AG04449 (cell line): ENCODE measurements at regions of chr20 and their contacts with region 1.

Region 1: DNA sequence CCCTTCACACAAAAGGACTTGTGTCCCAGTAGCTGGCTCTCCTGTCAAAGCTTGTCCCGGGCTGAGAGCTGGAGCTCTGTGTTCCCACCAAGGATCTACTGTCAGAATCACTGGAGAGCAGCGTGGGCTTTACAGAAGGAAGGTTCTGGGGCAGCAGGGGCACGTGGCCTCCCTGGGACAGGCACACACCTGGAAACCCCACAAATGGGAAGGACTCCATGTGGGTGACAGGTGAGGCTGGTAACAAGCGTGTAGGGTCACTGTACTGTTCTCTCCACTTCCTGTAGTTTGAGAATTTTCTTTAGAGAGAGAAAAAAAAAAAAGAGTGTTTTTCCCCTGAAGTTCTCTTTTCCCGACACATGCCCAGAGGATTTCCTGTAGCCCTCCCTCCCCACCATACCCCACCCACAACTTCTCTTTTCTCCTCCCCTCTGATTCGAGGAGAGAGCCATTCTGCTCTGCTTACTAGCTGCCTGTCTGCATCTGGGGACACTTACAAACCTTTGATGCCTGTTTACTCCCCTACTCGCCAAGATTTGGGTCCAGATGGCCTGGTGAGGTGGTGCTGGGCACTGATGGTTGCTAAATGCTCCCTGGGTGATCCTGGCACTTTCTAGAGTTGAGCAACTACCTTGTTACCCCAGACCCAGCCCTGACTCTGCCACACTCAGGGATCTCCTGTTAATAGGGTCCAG is 84.1 kb upstream of the SIRPA start:
- DNase-seq: no peak
- H3K4me3 ChIP-seq: no peak overlapping the region
- CTCF ChIP-seq: no peak

Region 2: GRCh38 chr20:1822564-1823447 is 11.7 kb after region 1 on chr20:
- CTCF ChIA-PET with region 1: interaction called, 10 read pairs
- POLR2A ChIA-PET with region 1: interaction called, 3 read pairs
- DNase-seq: no peak
- H3K4me3 ChIP-seq: no peak overlapping the region
- CTCF ChIP-seq: no peak

Region 3: DNA sequence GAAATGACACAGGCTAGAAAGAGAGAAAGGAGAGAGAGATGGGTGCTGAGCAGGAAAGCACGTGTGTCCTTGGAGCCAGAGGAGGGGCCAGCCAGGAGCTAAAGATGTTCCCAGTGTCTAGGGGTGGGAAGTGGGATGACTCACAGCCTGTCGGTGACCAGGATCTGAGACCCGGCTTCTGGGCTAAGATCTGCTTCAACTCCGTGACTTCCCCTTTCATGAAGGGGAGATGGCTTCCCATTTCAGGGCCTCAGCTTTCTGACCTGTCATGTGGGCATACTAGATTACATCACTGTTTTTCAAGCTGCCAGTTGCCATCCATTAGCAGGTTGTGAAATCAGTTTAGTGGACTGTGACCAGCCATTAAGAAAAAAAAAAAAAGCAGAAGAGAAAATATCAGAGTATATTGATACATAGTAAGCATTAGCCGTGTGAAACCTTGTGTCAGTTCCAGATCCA is 490.1 kb after region 1 on chr20:
- CTCF ChIA-PET with region 1: no interaction called
- POLR2A ChIA-PET with region 1: no interaction called
- DNase-seq: no peak
- H3K4me3 ChIP-seq: no peak overlapping the region
- CTCF ChIP-seq: no peak